CD8-positive, alpha-beta T cell (primary cell): ENCODE measurements at regions of chr12 and their contacts with region 1.

Region 1: GRCh38 chr12:14910090-14910915 is 24.6 kb upstream of the MGP start:
- DNase-seq: no peak
- ATAC-seq: no peak
- H3K4me3 ChIP-seq: no peak overlapping the region
- H3K4me3 Mint-ChIP-seq: no peak overlapping the region
- H3K27ac ChIP-seq: no peak overlapping the region
- H3K27ac Mint-ChIP-seq: peak overlapping the region; percentile 1
- H3K4me1 ChIP-seq: no peaks in the 10 kb centered on the region
- H3K4me1 Mint-ChIP-seq: peaks cover 10% of the 10 kb centered on the region
- H3K27me3 ChIP-seq: no peaks in the 10 kb centered on the region
- H3K27me3 Mint-ChIP-seq: no peaks in the 10 kb centered on the region
- CTCF ChIP-seq: no peak

Region 2: GRCh38 chr12:13937735-13938134 is 972.6 kb before region 1 on chr12:
- CTCF ChIA-PET with region 1: no interaction called
- POLR2A ChIA-PET with region 1: no interaction called
- intact Hi-C with region 1: no loop called
- DNase-seq: no peak
- ATAC-seq: no peak
- H3K4me3 ChIP-seq: no peak overlapping the region
- H3K4me3 Mint-ChIP-seq: no peak overlapping the region
- H3K27ac ChIP-seq: no peak overlapping the region
- H3K27ac Mint-ChIP-seq: no peak overlapping the region
- H3K4me1 ChIP-seq: no peaks in the 10 kb centered on the region
- H3K4me1 Mint-ChIP-seq: no peaks in the 10 kb centered on the region
- H3K27me3 ChIP-seq: no peaks in the 10 kb centered on the region
- H3K27me3 Mint-ChIP-seq: peaks cover 19% of the 10 kb centered on the region
- CTCF ChIP-seq: no peak

Region 3: GRCh38 chr12:14896521-14897169 is 13.7 kb before region 1 on chr12:
- CTCF ChIA-PET with region 1: no interaction called
- POLR2A ChIA-PET with region 1: no interaction called
- intact Hi-C with region 1: no loop called
- DNase-seq: no peak
- ATAC-seq: no peak
- H3K4me3 ChIP-seq: no peak overlapping the region
- H3K4me3 Mint-ChIP-seq: no peak overlapping the region
- H3K27ac ChIP-seq: no peak overlapping the region
- H3K27ac Mint-ChIP-seq: no peak overlapping the region
- H3K4me1 ChIP-seq: no peaks in the 10 kb centered on the region
- H3K4me1 Mint-ChIP-seq: no peaks in the 10 kb centered on the region
- H3K27me3 ChIP-seq: no peaks in the 10 kb centered on the region
- H3K27me3 Mint-ChIP-seq: no peaks in the 10 kb centered on the region
- CTCF ChIP-seq: no peak

Region 4: DNA sequence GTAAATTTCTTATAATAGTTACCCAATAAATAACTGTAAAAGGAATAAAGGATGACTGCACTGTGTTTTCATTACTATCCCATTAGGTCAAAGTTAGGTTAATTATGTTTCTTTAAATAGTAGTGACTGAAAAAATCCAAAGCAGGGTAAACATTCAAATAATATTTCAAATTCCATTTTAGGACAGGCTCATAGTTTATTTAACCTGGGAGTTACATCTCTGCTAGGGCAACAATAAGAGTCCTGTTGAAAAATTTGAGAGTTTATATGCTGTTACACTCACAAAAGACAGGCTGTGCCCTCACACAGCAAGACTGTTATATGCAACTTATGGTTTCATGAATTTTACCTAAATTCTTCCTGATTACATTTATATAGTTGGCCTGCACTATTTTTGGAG is 20.0 kb after region 1 on chr12:
- CTCF ChIA-PET with region 1: no interaction called
- POLR2A ChIA-PET with region 1: no interaction called
- intact Hi-C with region 1: loop called in 1 of 2 experiments (anchors 2 kb)
- DNase-seq: no peak
- ATAC-seq: no peak
- H3K4me3 ChIP-seq: no peak overlapping the region
- H3K4me3 Mint-ChIP-seq: no peak overlapping the region
- H3K27ac ChIP-seq: no peak overlapping the region
- H3K27ac Mint-ChIP-seq: no peak overlapping the region
- H3K4me1 ChIP-seq: peaks cover 2% of the 10 kb centered on the region
- H3K4me1 Mint-ChIP-seq: peaks cover 21% of the 10 kb centered on the region
- H3K27me3 ChIP-seq: no peaks in the 10 kb centered on the region
- H3K27me3 Mint-ChIP-seq: no peaks in the 10 kb centered on the region
- CTCF ChIP-seq: no peak

Region 5: GRCh38 chr12:15001733-15002382 is 91.6 kb after region 1 on chr12:
- CTCF ChIA-PET with region 1: no interaction called
- POLR2A ChIA-PET with region 1: no interaction called
- intact Hi-C with region 1: no loop called
- DNase-seq: no peak
- ATAC-seq: no peak
- H3K4me3 ChIP-seq: no peak overlapping the region
- H3K4me3 Mint-ChIP-seq: no peak overlapping the region
- H3K27ac ChIP-seq: no peak overlapping the region
- H3K27ac Mint-ChIP-seq: no peak overlapping the region
- H3K4me1 ChIP-seq: no peaks in the 10 kb centered on the region
- H3K4me1 Mint-ChIP-seq: no peaks in the 10 kb centered on the region
- H3K27me3 ChIP-seq: peaks cover 0 to 3% of the 10 kb centered on the region in 2 experiments
- H3K27me3 Mint-ChIP-seq: peaks cover 33% of the 10 kb centered on the region
- CTCF ChIP-seq: no peak

Region 6: DNA sequence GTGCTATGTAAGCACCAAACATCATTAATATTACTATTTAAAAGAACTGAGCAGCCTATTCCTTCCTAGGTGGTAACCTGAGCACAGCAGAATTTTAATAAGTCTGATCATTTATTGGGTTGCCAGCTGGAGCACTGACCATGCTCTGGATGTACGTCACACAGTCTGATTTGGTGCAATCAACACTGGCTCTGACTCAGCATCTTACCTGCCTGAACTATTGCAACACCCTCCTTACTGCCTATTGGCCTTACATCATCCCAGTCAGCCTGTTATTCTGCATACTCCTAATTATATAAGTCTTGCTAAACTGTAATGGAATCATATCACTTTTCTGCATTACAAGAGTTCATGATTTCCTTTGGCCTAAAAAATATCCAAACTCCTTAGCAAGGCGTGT is 561.7 kb after region 1 on chr12:
- CTCF ChIA-PET with region 1: no interaction called
- POLR2A ChIA-PET with region 1: no interaction called
- intact Hi-C with region 1: no loop called
- DNase-seq: no peak
- ATAC-seq: no peak
- H3K4me3 ChIP-seq: no peak overlapping the region
- H3K4me3 Mint-ChIP-seq: no peak overlapping the region
- H3K27ac ChIP-seq: no peak overlapping the region
- H3K27ac Mint-ChIP-seq: no peak overlapping the region
- H3K4me1 ChIP-seq: no peaks in the 10 kb centered on the region
- H3K4me1 Mint-ChIP-seq: no peaks in the 10 kb centered on the region
- H3K27me3 ChIP-seq: peaks cover 0 to 2% of the 10 kb centered on the region in 2 experiments
- H3K27me3 Mint-ChIP-seq: peaks cover 17% of the 10 kb centered on the region
- CTCF ChIP-seq: no peak